ENCODE measurements at regions of chr4 and their contacts with region 1.

Region 1: DNA sequence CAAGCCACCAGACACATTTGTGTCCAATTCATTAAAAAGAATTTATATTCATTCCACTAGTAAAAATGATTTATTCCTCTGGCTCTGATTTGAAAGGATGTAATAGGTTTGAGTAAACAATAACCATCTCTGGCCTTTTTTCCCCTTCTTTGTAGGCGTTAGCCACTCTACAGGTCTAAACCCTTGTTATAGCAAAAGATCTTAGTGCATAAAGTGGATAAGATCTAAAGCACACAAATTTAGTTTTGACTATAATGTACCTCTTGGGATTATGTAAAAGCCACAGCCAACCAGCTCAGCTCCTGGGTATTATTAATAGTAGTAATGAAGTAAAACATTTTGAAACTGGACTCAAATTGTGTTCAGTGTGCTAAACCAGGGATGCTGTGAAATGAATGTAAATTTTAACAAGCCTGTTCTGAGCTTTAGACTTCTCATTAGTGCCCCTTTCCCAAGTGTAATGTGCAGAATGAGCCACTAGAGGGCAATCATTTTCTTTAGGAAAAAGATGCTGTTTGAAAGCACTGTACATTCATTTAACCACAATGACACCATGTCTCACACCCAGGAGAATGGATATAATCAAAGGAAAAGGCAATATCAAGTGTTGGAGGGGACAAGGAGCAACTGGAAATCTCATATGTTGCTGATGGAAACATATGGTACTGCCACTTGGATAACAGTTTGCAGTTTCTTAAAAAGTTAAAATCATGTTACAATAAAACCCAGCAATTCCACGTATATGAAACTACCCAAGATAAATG is 69.7 kb downstream of the KLHL8 start:
- DNase-seq: peak; percentile 16 to 38
- H3K4me3 ChIP-seq: no peak overlapping the region
- H3K27ac ChIP-seq: no peak overlapping the region
- H3K4me1 ChIP-seq: no peaks in the 10 kb centered on the region
- H3K27me3 ChIP-seq: no peaks in the 10 kb centered on the region
- CTCF ChIP-seq: peak; percentile 91

Region 2: GRCh38 chr4:86921608-86922252 is 228.9 kb before region 1 on chr4:
- CTCF ChIA-PET with region 1: interaction called, 5 read pairs
- POLR2A ChIA-PET with region 1: interaction called, 5 read pairs
- intact Hi-C with region 1: loop called (anchors 1 kb)
- DNase-seq: no peak
- H3K4me3 ChIP-seq: no peak overlapping the region
- H3K27ac ChIP-seq: no peak overlapping the region
- H3K4me1 ChIP-seq: peaks cover 8% of the 10 kb centered on the region
- H3K27me3 ChIP-seq: no peaks in the 10 kb centered on the region
- CTCF ChIP-seq: no peak

Region 3: GRCh38 chr4:87120411-87121199 is 30.1 kb before region 1 on chr4:
- CTCF ChIA-PET with region 1: no interaction called
- POLR2A ChIA-PET with region 1: no interaction called
- intact Hi-C with region 1: no loop called
- DNase-seq: no peak
- H3K4me3 ChIP-seq: no peak overlapping the region
- H3K27ac ChIP-seq: no peak overlapping the region
- H3K4me1 ChIP-seq: no peaks in the 10 kb centered on the region
- H3K27me3 ChIP-seq: no peaks in the 10 kb centered on the region
- CTCF ChIP-seq: no peak

Region 4: GRCh38 chr4:87188048-87188447 is 37.4 kb after region 1 on chr4:
- CTCF ChIA-PET with region 1: no interaction called
- POLR2A ChIA-PET with region 1: no interaction called
- intact Hi-C with region 1: no loop called
- DNase-seq: no peak
- H3K4me3 ChIP-seq: no peak overlapping the region
- H3K27ac ChIP-seq: no peak overlapping the region
- H3K4me1 ChIP-seq: no peaks in the 10 kb centered on the region
- H3K27me3 ChIP-seq: no peaks in the 10 kb centered on the region
- CTCF ChIP-seq: no peak

Region 5: DNA sequence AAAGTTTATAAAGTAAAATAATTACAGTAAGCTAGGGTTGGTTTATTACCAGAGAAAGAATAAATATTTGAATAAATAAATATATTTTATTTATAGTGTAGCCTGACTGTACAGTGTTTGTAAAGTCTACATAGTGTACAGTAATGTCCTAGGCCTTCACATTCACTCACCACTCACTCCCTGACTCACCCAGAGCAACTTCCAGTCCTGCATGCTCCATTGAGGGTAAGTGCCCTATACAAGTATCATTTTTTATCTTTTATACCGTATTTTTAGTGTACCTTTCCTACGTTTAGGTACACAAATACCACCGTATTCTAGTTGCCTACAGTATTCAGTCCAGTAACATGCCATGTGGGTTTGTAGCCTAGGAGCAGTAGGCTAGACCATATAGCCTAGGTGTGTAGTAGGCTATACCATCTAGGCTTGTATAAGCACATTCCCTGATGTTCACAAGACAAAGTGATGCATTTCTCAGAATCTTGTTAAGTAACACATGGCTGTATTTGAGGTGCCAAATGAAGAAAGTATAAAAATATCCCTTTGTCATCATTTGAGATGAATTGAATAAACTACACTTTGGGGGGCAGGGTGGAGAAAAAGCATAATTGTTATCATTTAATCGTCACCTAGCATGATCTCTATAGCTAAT is 84.5 kb after region 1 on chr4:
- CTCF ChIA-PET with region 1: no interaction called
- POLR2A ChIA-PET with region 1: no interaction called
- intact Hi-C with region 1: loop called (anchors 2 kb)
- DNase-seq: no peak
- H3K4me3 ChIP-seq: peak overlapping the region; percentile 75; the same call in 1 of the 2 replicates
- H3K27ac ChIP-seq: no peak overlapping the region
- H3K4me1 ChIP-seq: peaks cover 5% of the 10 kb centered on the region
- H3K27me3 ChIP-seq: no peaks in the 10 kb centered on the region
- CTCF ChIP-seq: no peak

Region 6: DNA sequence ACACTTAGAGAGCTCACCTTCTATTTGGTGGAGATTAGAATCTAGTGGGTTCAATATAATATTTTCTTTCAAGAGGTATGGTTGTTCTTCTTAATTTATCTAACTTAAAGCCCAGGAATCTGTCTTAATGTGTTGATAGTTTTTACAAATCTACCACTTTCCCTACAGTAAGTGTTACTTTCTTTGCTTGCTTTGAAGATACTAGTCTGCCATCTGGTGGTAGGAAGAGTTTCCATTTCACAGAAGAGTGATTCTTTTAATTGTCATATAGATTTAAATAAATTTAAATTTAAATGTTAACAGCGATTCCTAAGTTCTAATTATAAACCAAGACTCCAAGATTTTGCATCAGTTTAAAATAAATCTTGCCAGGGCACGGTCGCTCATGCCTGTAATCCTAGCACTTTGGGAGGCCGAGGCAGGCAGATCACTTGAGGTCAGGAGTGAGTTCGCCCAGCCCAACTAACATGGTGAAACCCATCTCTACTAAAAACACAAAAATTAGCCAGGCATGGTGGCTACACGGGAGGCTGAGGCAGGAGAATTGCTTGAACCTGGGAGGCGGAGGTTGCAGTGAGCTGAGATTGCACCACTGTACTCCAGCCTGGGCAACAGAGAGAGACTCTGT is 315.2 kb after region 1 on chr4:
- CTCF ChIA-PET with region 1: no interaction called
- POLR2A ChIA-PET with region 1: interaction called, 6 read pairs
- intact Hi-C with region 1: loop called (anchors 1 kb)
- DNase-seq: no peak
- H3K4me3 ChIP-seq: no peak overlapping the region
- H3K27ac ChIP-seq: no peak overlapping the region
- H3K4me1 ChIP-seq: 0 out of 2 replicates have a peak, but pooled peaks cover 1% of the 10 kb centered on the region
- H3K27me3 ChIP-seq: no peaks in the 10 kb centered on the region
- CTCF ChIP-seq: peak; percentile 72